Dorsolateral prefrontal cortex (tissue), 120 donors: ENCODE measurements at regions of chr6 and their contacts with region 1.

Region 1: DNA sequence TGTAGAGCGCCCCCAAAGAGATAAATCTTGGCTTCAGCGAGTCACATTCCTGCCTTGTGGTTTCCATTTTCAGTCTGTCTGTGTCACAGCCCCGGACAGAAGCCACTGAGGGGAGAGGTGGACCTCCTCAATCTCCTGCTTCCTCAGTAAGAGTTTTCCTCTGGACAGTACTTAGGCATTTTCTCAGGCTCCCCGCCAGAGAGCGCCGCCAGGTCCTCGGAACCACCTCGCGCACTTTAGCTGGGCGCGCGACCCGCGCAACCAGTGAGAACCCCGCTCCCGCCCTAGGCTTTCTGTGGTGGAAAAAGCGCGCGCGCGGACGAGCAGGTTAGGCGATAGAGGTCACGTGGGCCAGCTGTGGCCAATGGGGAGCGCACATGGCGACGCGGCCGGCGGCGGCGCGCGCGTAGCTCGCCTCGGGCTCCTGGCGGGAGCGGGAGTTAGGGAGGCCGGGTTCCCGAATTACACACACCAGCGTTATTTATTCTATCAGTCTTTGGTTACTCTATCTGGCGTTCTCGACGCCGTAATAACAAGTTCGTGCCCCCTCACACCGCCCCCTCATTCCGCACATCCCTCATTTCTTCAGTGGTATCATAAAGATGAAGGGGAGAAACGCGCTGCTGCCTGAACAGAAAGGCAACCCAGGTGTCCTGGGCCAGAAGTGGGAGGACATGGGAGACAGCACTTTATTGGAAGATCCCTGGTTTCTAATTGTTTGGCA is 19.4 kb downstream of the PXT1 start:
- DNase-seq: peak; percentile 96 to 99 (median 97)
- H3K4me3 ChIP-seq: peak overlapping the region; percentile 45 to 81 (median 67)
- H3K27ac ChIP-seq: peak overlapping the region; percentile 27 to 93 (median 82)
- H3K27me3 ChIP-seq: no peaks in the 10 kb centered on the region
- CTCF ChIP-seq: peak; percentile 38 to 84 (median 70)

Region 2: DNA sequence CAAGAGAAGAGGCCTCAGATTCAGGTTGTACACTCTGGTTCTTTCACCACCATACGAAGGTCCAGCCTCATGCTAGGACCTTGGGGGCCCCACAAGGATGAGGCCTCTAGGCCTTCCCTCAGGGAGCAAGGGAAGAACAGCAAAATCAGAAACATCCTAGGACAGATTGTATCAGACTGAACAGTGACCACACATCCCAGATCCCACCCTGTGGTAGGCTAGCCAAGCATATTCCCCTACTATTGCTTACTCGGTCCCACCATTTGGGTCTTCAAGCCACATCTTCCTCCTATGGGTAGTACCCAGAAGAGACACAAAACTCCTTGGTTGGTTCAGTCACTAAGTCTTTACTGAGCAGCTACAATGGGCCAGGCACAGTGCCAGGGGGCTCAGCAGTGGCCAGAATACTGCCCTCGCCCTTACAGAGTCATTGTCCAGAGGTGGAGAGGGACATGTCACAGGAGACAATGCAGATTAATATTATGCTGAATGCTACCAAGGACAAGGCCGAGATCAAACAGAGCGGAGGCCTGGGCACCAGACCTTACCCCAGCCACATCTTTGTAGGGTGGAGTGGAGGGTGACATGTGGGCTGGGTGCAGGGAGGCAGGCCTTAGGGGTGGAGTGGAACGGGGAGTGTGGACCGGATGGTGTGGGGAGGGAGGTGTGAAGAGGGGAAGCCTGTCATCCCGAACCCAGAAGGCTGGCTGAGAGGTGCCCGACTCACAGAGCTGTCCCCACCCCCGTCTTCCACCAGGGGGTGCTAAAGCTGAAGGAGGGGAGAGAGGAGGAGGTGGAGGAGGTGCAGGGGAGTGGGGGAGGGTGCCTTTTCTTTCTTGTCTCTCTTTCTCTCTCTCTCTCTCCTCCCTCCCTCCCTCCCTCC is 299.8 kb before region 1 on chr6:
- intact Hi-C with region 1: no loop called
- DNase-seq: peak in 9 of 10 donors; percentile 44 to 86 (median 74)
- H3K4me3 ChIP-seq: peak overlapping the region in 1 of 59 donors; percentile 9
- H3K27ac ChIP-seq: peak overlapping the region in 23 of 59 donors; percentile 2 to 69 (median 39)
- H3K27me3 ChIP-seq: no peaks in the 10 kb centered on the region
- CTCF ChIP-seq: peak in 54 of 56 donors; percentile 35 to 76 (median 62)

Region 3: GRCh38 chr6:36442671-36443470 is 19.6 kb after region 1 on chr6 and contains the starts of genes KCTD20 and PXT1:
- intact Hi-C with region 1: loop called (anchors 1 kb)
- DNase-seq: peak; percentile 77 to 92 (median 87)
- H3K4me3 ChIP-seq: peak within 1 kb of the TSS; percentile 74 to 99 (median 92)
- H3K27ac ChIP-seq: peak within 1 kb of the TSS; percentile 68 to 99 (median 96)
- H3K27me3 ChIP-seq: no peaks in the 10 kb centered on the region
- CTCF ChIP-seq: peak in 24 of 56 donors; percentile 7 to 57 (median 24)
- total RNA-seq, gene KCTD20: 25.8 to 51.1 (median 35.6) TPM
- total RNA-seq, gene PXT1: 0.17 to 1.1 (median 0.34) TPM in 51 of 120 experiments, not detected in the others

Region 4: DNA sequence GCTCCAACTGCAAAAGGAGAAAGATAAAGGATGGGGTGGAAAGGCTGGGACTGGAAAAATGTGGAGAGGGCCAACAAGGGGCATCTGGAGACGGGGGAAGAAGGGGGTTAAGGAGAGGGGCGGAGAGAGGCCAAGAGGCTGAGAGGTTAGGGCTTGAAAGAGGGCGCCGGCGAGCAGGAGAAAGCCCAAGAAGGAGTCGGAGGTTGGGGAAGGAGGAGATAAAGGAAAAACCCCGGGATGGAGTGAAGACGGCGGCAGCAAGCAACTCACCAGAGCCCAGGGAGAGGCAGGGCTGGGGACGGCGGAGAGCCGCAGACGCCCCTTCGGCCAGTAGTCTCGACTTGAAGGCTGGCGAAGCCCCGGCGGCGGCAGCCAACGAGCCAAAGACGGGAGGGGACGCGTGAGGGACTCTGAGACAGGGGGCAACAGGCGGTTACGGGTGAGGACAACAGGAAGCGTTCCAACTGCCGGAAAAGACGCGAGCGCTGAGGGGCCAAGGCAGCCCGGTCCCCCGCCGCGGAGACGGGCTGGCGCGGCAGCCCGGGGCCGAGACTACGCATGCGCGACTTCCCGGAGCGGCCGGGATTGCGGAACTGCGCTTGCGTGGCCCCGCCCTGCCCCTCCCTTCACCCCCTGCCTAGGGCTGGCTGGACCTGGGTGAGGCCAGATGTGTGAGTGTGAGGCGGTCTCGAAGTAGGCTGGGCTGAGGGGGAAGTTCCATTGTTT is 123.8 kb after region 1 on chr6 and contains the start of gene STK38:
- intact Hi-C with region 1: loop called (anchors 2 kb)
- DNase-seq: peak; percentile 72 to 91 (median 84)
- H3K4me3 ChIP-seq: peak within 1 kb of the TSS; percentile 58 to 100 (median 96)
- H3K27ac ChIP-seq: peak within 1 kb of the TSS; percentile 88 to 100 (median 97)
- H3K27me3 ChIP-seq: no peaks in the 10 kb centered on the region
- CTCF ChIP-seq: peak in 39 of 56 donors; percentile 3 to 63 (median 37)
- total RNA-seq, gene STK38: 6.3 to 23.4 (median 13.6) TPM

Region 5: DNA sequence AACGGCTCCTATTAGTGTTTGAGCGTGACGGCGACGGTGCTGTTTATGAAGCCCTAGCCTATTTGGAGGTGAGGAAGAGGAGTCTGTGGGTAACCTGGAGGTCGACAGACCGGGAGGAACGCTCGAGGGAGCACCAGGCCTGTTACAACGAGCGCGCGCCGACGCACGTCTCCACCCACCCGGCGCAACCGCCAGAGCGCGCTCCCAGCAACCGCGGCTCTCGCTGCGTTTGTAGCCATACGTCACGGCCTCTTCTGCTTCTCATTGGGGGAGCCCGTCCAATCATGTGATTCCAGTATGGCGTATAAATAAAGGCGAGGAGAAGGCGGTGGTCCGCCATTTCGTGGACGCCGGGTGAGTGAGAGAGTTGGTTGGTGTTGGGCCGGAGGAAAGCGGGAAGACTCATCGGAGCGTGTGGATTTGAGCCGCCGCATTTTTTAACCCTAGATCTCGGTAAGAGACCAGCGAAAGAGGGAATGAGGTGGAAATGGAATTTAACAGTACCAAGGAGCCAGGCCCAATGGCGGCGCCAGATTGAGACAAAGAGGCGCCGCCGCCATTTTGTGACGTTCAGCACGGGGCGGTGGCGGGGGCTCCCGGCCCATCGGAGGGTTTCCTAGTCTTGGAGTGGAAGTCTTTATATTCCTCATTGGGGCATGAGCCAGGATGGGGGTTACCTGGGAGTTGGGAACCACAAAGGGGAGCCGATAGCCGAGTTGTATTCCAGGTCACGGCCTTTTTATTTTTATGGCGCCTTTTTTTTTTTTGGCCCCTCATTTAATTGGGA is 171.0 kb after region 1 on chr6 and contains the start of gene SRSF3:
- intact Hi-C with region 1: loop called (anchors 1 to 2 kb)
- DNase-seq: peak; percentile 90 to 98 (median 97)
- H3K4me3 ChIP-seq: peak within 1 kb of the TSS; percentile 53 to 99 (median 91)
- H3K27ac ChIP-seq: peak within 1 kb of the TSS; percentile 88 to 100 (median 99)
- H3K27me3 ChIP-seq: no peaks in the 10 kb centered on the region
- CTCF ChIP-seq: peak in 55 of 56 donors; percentile 22 to 78 (median 62)
- total RNA-seq, gene SRSF3: 108 to 194 (median 145) TPM

Region 6: GRCh38 chr6:36759148-36759759 is 336.0 kb after region 1 on chr6:
- intact Hi-C with region 1: loop called in 1 of 2 experiments (anchors 5 kb)
- DNase-seq: peak; percentile 73 to 89 (median 82)
- H3K4me3 ChIP-seq: no peak overlapping the region
- H3K27ac ChIP-seq: peak overlapping the region in 21 of 59 donors; percentile 5 to 98 (median 93)
- H3K27me3 ChIP-seq: no peaks in the 10 kb centered on the region
- CTCF ChIP-seq: peak; percentile 78 to 98 (median 95)

Region 7: GRCh38 chr6:36985808-36986703 is 562.8 kb after region 1 on chr6 and contains the start of gene MTCH1:
- intact Hi-C with region 1: loop called in 1 of 2 experiments (anchors 5 kb)
- DNase-seq: peak; percentile 77 to 94 (median 90)
- H3K4me3 ChIP-seq: peak within 1 kb of the TSS; percentile 58 to 100 (median 99)
- H3K27ac ChIP-seq: peak within 1 kb of the TSS; percentile 88 to 100 (median 99)
- H3K27me3 ChIP-seq: no peaks in the 10 kb centered on the region
- CTCF ChIP-seq: peak in 26 of 56 donors; percentile 1 to 57 (median 20)
- total RNA-seq, gene MTCH1: 246 to 500 (median 376) TPM